AG04449 (cell line): ENCODE measurements at regions of chr5 and their contacts with region 1.

Region 1: GRCh38 chr5:130871346-130872086 is 293.5 kb downstream of the HINT1 start:
- DNase-seq: no peak
- H3K4me3 ChIP-seq: no peak overlapping the region
- CTCF ChIP-seq: peak; percentile 48

Region 2: DNA sequence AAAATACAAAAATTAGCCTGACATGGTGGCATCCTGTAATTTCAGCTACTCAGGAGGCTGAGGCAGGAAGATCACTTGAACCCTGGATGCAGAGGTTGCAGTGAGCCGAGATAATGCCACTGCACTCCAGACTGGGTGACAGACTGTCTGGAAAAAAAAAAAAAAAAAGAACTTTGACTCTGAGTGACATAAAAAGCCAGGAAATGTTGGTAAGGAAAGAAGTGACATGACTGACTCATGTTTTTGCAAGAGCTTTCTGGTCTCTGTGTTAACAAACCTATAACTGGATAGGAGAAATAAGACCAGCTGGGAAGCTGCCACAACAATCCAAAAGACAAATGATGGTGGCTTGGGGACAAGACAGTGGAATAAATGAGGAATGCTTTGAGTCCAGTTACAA is 21.5 kb after region 1 on chr5:
- CTCF ChIA-PET with region 1: no interaction called
- POLR2A ChIA-PET with region 1: no interaction called
- DNase-seq: no peak
- H3K4me3 ChIP-seq: no peak overlapping the region
- CTCF ChIP-seq: no peak

Region 3: GRCh38 chr5:131005963-131006684 is 134.6 kb after region 1 on chr5:
- CTCF ChIA-PET with region 1: interaction called, 23 read pairs
- POLR2A ChIA-PET with region 1: no interaction called
- DNase-seq: no peak
- H3K4me3 ChIP-seq: no peak overlapping the region
- CTCF ChIP-seq: peak; percentile 11

Region 4: GRCh38 chr5:131114754-131115153 is 243.2 kb after region 1 on chr5:
- CTCF ChIA-PET with region 1: interaction called, 17 read pairs
- POLR2A ChIA-PET with region 1: no interaction called
- DNase-seq: no peak
- H3K4me3 ChIP-seq: no peak overlapping the region
- CTCF ChIP-seq: no peak